Activated CD4-positive, alpha-beta memory T cell treated with anti-CD3 and anti-CD28 coated beads, Interleukin-2, amount 10 ng/mL, durations not matched to agents 7 days and 5 days (primary cell): ENCODE measurements at regions of chr20 and their contacts with region 1.

Region 1: GRCh38 chr20:2840138-2840966 is at the starts of genes PCED1A and VPS16:
- DNase-seq: peak; percentile 89
- H3K4me3 Mint-ChIP-seq: peak within 1 kb of the TSS; percentile 83
- H3K27ac Mint-ChIP-seq: peak within 1 kb of the TSS; percentile 80
- H3K4me1 Mint-ChIP-seq: peaks cover 23% of the 10 kb centered on the region
- H3K27me3 Mint-ChIP-seq: no peaks in the 10 kb centered on the region
- total RNA-seq, gene PCED1A: 25.0 to 25.7 TPM
- total RNA-seq, gene VPS16: 49.7 to 53.0 TPM

Region 2: DNA sequence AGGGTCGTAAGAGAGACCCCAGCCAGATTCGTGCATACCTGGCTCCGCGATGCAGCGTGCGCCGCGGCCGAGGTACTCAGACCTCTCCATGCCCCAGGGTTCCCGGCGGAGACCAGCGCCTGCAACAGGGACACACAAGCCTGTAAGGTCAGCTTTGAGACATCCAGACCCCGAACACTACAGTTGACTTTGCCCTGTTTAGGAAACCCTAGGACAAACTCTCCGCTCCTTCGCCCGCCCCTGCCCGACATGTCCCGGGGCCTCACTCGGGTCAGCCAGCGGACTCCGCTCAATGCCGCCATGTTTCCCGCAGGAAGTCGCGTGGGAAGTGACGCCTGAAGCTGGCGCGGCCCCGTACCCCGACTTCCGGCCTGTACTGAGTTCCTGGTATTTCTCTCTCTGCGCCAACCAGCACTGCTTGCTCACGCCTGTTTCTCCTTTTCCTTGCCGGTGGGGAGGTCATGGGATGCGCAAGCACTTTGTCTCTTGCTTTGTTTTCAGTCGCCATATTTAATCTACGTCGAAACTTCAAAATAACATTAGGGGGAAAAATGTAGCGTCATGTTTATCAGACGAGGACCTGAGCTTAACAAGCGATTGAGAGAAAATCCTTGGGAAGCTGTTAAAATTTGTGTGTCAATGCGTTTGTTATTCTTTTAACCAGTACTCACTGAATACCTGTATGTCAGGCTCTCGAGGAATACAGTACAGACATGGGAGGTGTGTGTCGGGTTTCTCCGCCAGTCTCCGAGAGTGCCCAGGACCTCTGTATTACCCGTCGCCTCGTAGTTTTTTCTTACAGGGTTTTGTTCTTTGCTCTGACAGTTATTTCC is 176.2 kb before region 1 on chr20 and contains the start of gene IDH3B:
- CTCF ChIA-PET with region 1: no interaction called
- POLR2A ChIA-PET with region 1: interaction called, 10 read pairs
- DNase-seq: peak; percentile 95
- H3K4me3 Mint-ChIP-seq: peak within 1 kb of the TSS; percentile 84
- H3K27ac Mint-ChIP-seq: peak within 1 kb of the TSS; percentile 95
- H3K4me1 Mint-ChIP-seq: peaks cover 34% of the 10 kb centered on the region
- H3K27me3 Mint-ChIP-seq: peaks cover 8% of the 10 kb centered on the region
- total RNA-seq, gene IDH3B: 78.8 to 82.2 TPM

Region 3: GRCh38 chr20:2822073-2822472 is 18.3 kb before region 1 on chr20:
- CTCF ChIA-PET with region 1: no interaction called
- POLR2A ChIA-PET with region 1: interaction called, 10 read pairs
- DNase-seq: peak; percentile 64
- H3K4me3 Mint-ChIP-seq: no peak overlapping the region
- H3K27ac Mint-ChIP-seq: no peak overlapping the region
- H3K4me1 Mint-ChIP-seq: peaks cover 34% of the 10 kb centered on the region
- H3K27me3 Mint-ChIP-seq: peaks cover 44% of the 10 kb centered on the region

Region 4: DNA sequence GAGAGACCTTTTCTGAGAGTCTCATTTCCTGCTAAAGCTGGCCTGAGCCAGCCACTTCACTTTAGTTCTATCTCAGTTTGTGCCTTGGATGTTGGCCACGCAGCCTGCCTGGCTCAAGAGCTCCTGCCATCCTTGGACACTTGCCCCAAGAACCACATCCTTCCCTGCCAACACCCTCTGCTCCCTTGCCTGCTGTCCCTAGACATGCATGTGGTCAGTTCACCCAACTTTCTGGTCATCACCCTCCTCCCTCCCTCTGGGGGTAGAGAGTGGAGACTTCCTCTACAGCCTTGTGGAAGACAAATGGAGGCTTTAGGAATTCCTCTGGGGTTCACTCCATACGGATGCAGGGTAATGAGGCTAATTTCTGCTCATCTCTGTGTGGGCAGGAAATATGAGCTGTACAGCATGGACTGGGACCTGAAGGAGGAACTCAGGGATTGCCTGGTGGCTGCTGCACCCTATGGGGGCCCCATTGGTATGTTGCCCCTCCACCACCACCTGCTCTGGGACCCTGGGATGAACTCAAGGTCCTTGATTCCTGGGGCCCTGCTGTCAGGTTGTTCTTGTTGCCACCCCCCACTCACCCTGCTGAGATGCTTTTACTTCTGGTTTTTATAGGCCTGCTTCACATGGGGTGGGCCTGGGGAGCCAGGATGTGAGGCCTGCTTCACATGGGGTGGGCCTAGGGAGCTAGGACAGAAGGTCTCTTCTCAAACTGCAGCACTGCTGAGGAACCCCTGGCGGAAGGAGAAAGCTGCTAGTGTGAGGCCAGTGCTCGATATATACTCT is 19.2 kb after region 1 on chr20:
- CTCF ChIA-PET with region 1: no interaction called
- POLR2A ChIA-PET with region 1: no interaction called
- DNase-seq: no peak
- H3K4me3 Mint-ChIP-seq: no peak overlapping the region
- H3K27ac Mint-ChIP-seq: no peak overlapping the region
- H3K4me1 Mint-ChIP-seq: peaks cover 3% of the 10 kb centered on the region
- H3K27me3 Mint-ChIP-seq: no peaks in the 10 kb centered on the region

Region 5: GRCh38 chr20:2873010-2873746 is 32.8 kb after region 1 on chr20 and contains the start of gene PTPRA:
- CTCF ChIA-PET with region 1: interaction called, 3 read pairs
- POLR2A ChIA-PET with region 1: interaction called, 23 read pairs
- DNase-seq: peak; percentile 94
- H3K4me3 Mint-ChIP-seq: peak within 1 kb of the TSS; percentile 87
- H3K27ac Mint-ChIP-seq: peak within 1 kb of the TSS; percentile 87
- H3K4me1 Mint-ChIP-seq: peaks cover 48% of the 10 kb centered on the region
- H3K27me3 Mint-ChIP-seq: no peaks in the 10 kb centered on the region
- total RNA-seq, gene PTPRA: 66.9 to 71.5 TPM